MCF 10A (cell line): ENCODE measurements at regions of chr7 and their contacts with region 1.

Region 1: DNA sequence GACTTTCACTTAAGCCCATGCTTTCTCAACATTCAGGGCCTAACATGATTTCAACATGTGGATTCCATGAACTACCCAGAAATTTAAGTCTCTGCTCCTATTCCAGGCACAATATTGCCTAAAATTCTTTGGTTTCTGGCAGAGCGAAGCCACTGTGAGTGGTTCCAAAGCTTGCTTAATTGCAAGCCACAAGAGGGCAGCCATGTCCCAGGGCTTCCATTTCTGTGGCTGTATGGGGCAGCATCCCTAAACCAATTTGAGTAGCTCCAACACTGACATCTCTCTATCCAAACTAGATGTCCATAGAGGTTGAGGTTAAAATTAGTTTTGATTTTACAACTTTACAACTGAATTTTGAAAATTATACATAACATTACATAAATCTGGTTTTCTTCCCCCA is 56.3 kb upstream of the MDFIC start:
- DNase-seq: peak; percentile 62
- H3K4me3 Mint-ChIP-seq: no peak overlapping the region
- H3K27ac Mint-ChIP-seq: no peak overlapping the region
- H3K4me1 Mint-ChIP-seq: no peaks in the 10 kb centered on the region
- H3K27me3 Mint-ChIP-seq: no peaks in the 10 kb centered on the region
- CTCF ChIP-seq: peak; percentile 87

Region 2: GRCh38 chr7:114939484-114940097 is 74.0 kb after region 1 on chr7:
- CTCF ChIA-PET with region 1: interaction called, 11 read pairs
- POLR2A ChIA-PET with region 1: interaction called, 3 read pairs
- intact Hi-C with region 1: loop called (anchors 2 kb)
- DNase-seq: no peak
- H3K4me3 Mint-ChIP-seq: no peak overlapping the region
- H3K27ac Mint-ChIP-seq: no peak overlapping the region
- H3K4me1 Mint-ChIP-seq: peaks cover 6% of the 10 kb centered on the region
- H3K27me3 Mint-ChIP-seq: no peaks in the 10 kb centered on the region
- CTCF ChIP-seq: peak; percentile 21

Region 3: DNA sequence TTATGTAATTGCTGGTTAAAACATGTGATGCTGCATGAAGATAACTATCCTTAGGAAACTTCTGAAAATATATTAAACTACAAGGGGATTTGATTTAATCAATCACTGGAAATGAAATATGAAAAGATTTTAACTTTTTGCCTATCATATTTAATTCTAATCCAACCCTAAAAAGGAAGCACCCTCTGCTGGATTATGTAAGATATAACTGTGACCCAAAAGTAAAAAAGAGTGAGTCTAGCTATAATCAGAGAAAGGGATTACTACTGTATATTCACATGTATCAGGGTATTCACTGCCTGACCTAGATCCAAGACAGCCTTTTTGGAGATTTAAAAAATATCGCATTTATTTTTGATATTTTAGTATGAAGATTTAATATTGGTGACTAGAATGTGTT is 351.8 kb after region 1 on chr7:
- CTCF ChIA-PET with region 1: interaction called, 27 read pairs
- POLR2A ChIA-PET with region 1: no interaction called
- intact Hi-C with region 1: loop called (anchors 2 kb)
- DNase-seq: peak; percentile 4
- H3K4me3 Mint-ChIP-seq: no peak overlapping the region
- H3K27ac Mint-ChIP-seq: no peak overlapping the region
- H3K4me1 Mint-ChIP-seq: no peaks in the 10 kb centered on the region
- H3K27me3 Mint-ChIP-seq: peaks cover 40% of the 10 kb centered on the region
- CTCF ChIP-seq: no peak

Region 4: DNA sequence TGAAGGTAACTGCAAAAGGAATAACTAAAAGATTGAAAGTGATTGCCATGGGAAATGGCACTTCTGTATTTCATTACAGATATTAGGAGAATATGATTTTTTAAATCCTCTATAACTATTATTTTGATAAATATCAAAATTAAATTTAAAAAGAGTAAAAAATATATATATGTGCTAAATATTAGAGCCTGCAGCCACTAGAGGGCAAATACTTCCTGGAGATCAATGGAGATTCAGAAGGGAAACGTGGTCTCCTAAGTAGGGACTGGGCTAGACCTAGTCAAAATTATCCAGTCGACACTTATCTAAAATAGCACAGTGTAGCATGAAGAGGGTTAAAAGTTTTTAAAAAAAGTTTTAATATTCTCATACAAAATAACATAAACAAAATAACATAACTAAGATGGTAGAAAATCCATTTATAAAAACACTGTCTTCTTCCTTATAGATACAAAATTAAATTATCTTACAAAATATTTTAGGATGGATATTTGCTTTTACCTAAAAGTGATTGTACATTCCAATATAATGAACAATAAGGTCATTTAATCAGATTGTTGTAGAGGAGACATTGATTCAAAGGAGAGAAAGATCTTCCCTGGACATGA is 490.7 kb after region 1 on chr7:
- CTCF ChIA-PET with region 1: no interaction called
- POLR2A ChIA-PET with region 1: no interaction called
- intact Hi-C with region 1: loop called (anchors 10 kb)
- DNase-seq: peak; percentile 8
- H3K4me3 Mint-ChIP-seq: no peak overlapping the region
- H3K27ac Mint-ChIP-seq: no peak overlapping the region
- H3K4me1 Mint-ChIP-seq: no peaks in the 10 kb centered on the region
- H3K27me3 Mint-ChIP-seq: peaks cover 62% of the 10 kb centered on the region
- CTCF ChIP-seq: peak; percentile 45

Region 5: DNA sequence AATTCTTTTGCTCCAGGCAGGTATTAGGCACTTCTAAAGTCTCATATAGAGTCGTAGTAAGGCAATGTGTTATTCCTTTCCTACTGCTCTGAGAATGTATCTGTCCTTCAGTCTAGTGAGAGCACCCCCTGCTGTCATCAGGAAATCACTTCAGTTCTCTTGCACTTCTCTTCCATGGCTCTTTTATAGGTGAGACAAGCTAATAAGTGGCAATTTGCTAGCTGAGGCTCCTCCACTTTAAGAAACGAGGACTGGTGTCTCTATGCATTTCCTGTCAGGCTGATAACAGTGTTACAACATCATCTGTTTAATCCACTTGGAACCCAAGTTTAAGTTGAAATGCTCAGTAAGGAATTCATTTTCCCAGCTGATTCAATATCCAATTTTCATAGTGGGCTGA is 814.4 kb after region 1 on chr7:
- CTCF ChIA-PET with region 1: interaction called, 11 read pairs
- POLR2A ChIA-PET with region 1: no interaction called
- intact Hi-C with region 1: loop called (anchors 5 kb)
- DNase-seq: peak; percentile 48
- H3K4me3 Mint-ChIP-seq: no peak overlapping the region
- H3K27ac Mint-ChIP-seq: no peak overlapping the region
- H3K4me1 Mint-ChIP-seq: no peaks in the 10 kb centered on the region
- H3K27me3 Mint-ChIP-seq: peaks cover 93% of the 10 kb centered on the region
- CTCF ChIP-seq: peak; percentile 38

Region 6: GRCh38 chr7:115707258-115708012 is 841.9 kb after region 1 on chr7:
- CTCF ChIA-PET with region 1: no interaction called
- POLR2A ChIA-PET with region 1: no interaction called
- intact Hi-C with region 1: loop called (anchors 10 kb)
- DNase-seq: peak; percentile 32
- H3K4me3 Mint-ChIP-seq: no peak overlapping the region
- H3K27ac Mint-ChIP-seq: no peak overlapping the region
- H3K4me1 Mint-ChIP-seq: no peaks in the 10 kb centered on the region
- H3K27me3 Mint-ChIP-seq: peaks cover 44% of the 10 kb centered on the region
- CTCF ChIP-seq: peak; percentile 31

Region 7: DNA sequence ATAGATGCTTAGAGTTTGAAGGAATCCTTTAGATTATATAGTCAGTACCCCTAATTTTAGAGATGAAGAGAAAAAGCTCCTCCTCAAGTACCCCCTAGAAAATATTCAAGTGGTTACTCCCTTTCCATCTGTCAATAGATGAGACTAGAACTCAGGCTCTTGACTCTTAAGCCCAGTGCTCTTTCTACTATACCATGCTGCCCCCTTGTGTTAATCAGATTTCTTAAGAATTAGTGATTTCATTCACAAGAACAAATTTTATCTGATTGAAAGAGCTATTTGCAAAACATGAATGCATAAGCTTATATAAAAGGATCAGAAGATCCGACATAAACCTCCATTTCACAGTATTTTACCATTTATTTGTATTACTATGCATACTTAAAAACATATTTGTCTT is 985.7 kb after region 1 on chr7:
- CTCF ChIA-PET with region 1: no interaction called
- POLR2A ChIA-PET with region 1: no interaction called
- intact Hi-C with region 1: loop called (anchors 5 kb)
- DNase-seq: peak; percentile 50
- H3K4me3 Mint-ChIP-seq: no peak overlapping the region
- H3K27ac Mint-ChIP-seq: no peak overlapping the region
- H3K4me1 Mint-ChIP-seq: no peaks in the 10 kb centered on the region
- H3K27me3 Mint-ChIP-seq: peaks cover 92% of the 10 kb centered on the region
- CTCF ChIP-seq: peak; percentile 35